ENCODE measurements at regions of chr1 and their contacts with region 1.

Region 1: GRCh38 chr1:43529206-43529731 is 1.4 kb upstream of the PTPRF start:
- DNase-seq: peak; percentile 81
- H3K4me3 ChIP-seq: no peak overlapping the region
- H3K27ac ChIP-seq: no peak overlapping the region
- H3K4me1 ChIP-seq: peaks cover 24% of the 10 kb centered on the region
- H3K27me3 ChIP-seq: no peaks in the 10 kb centered on the region
- CTCF ChIP-seq: peak; percentile 88 to 98
- POLR2A ChIP-seq: no peak

Region 2: DNA sequence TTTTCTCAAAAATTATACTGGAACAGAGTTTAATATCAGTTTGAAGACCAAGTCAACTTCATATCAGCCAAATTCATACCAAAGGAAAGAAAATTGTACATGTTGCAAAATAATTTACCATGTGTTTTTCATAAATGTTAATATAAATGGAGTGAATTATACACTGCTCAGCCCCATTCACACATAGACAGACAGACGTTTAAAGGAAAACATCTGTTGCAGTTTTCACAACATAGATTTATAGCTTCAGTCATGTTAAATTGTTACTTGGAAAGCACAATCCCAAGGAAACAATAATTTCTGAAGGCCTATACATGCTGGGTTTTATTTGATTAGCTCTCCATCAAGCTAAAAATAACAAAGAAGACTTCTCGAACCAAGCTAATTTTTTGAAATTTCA is 47.8 kb before region 1 on chr1:
- CTCF ChIA-PET with region 1: no interaction called
- POLR2A ChIA-PET with region 1: no interaction called
- dilution Hi-C with region 1: no loop called
- intact Hi-C with region 1: loop called (anchors 1 kb)
- DNase-seq: no peak
- H3K4me3 ChIP-seq: no peak overlapping the region
- H3K27ac ChIP-seq: no peak overlapping the region
- H3K4me1 ChIP-seq: peaks cover 13% of the 10 kb centered on the region
- H3K27me3 ChIP-seq: no peaks in the 10 kb centered on the region
- CTCF ChIP-seq: no peak
- POLR2A ChIP-seq: no peak

Region 3: GRCh38 chr1:43554444-43554992 is 25.2 kb after region 1 on chr1:
- CTCF ChIA-PET with region 1: interaction called, 15 read pairs
- POLR2A ChIA-PET with region 1: no interaction called
- dilution Hi-C with region 1: no loop called
- intact Hi-C with region 1: no loop called
- DNase-seq: no peak
- H3K4me3 ChIP-seq: no peak overlapping the region
- H3K27ac ChIP-seq: no peak overlapping the region
- H3K4me1 ChIP-seq: peaks cover 4% of the 10 kb centered on the region
- H3K27me3 ChIP-seq: no peaks in the 10 kb centered on the region
- CTCF ChIP-seq: peak; percentile 48 to 61
- POLR2A ChIP-seq: no peak

Region 4: DNA sequence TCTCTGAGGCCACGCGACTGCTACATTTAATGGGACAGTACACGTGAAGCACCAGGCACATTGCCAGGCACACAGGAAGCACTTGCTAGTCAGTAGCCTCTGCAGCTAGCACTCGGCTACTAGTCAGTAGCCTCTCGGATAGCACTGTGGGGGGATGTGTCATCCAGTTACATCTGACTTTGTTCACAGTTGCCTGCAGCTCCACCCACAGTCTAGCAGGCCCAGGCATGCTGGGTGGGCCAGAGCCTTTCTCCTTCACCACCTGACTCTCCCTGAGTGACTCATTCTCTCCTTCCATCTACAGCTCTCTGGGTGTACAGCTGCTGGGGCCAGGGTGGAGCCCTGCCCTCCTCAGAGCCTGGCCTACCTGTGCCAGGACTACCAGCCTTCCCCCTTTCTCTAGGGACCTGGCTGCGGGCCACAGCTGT is 52.9 kb after region 1 on chr1:
- CTCF ChIA-PET with region 1: interaction called, 4 read pairs
- POLR2A ChIA-PET with region 1: interaction called, 3 read pairs
- dilution Hi-C with region 1: no loop called
- intact Hi-C with region 1: loop called (anchors 5 kb)
- DNase-seq: peak; percentile 89
- H3K4me3 ChIP-seq: no peak overlapping the region
- H3K27ac ChIP-seq: no peak overlapping the region
- H3K4me1 ChIP-seq: peaks cover 3% of the 10 kb centered on the region
- H3K27me3 ChIP-seq: no peaks in the 10 kb centered on the region
- CTCF ChIP-seq: no peak
- POLR2A ChIP-seq: no peak

Region 5: GRCh38 chr1:43611950-43612349 is 82.7 kb after region 1 on chr1:
- CTCF ChIA-PET with region 1: no interaction called
- POLR2A ChIA-PET with region 1: no interaction called
- dilution Hi-C with region 1: no loop called
- intact Hi-C with region 1: no loop called
- DNase-seq: no peak
- H3K4me3 ChIP-seq: no peak overlapping the region
- H3K27ac ChIP-seq: no peak overlapping the region
- H3K4me1 ChIP-seq: no peaks in the 10 kb centered on the region
- H3K27me3 ChIP-seq: no peaks in the 10 kb centered on the region
- CTCF ChIP-seq: no peak
- POLR2A ChIP-seq: no peak

Region 6: DNA sequence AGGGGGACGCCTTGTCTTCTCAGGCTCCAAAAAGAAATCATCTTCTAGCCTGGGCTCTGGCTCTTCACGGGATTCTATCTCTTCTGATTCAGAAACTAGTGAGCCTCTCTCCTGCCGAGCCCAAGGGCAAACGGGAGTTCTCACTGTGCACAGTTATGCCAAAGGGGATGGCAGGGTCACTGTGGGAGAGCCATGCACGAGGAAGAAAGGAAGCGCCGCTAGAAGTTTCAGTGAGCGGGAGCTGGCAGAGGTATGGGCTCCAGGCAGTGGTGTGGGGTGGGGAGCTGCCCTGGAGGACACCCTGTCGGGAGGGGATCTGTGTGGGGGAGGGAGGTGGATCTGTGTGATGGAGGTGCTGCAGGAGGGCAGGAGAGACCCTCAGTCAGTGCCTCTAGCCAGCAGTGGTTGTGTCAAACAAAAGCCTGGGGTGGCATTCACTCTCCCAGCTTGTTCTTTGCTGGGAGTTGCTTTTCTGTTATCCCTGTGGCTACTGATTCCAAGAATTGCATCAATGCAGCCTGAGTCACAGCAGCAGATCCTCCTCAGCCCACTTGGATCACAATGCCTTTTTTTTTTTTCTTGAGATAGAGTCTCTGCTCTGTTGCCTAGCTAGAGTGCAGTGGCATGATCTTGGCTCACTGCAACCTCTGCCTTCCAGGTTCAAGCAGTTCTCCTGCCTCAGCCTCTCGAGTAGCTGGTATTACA is 142.5 kb after region 1 on chr1:
- CTCF ChIA-PET with region 1: no interaction called
- POLR2A ChIA-PET with region 1: no interaction called
- dilution Hi-C with region 1: no loop called
- intact Hi-C with region 1: no loop called
- DNase-seq: no peak
- H3K4me3 ChIP-seq: no peak overlapping the region
- H3K27ac ChIP-seq: no peak overlapping the region
- H3K4me1 ChIP-seq: no peaks in the 10 kb centered on the region
- H3K27me3 ChIP-seq: no peaks in the 10 kb centered on the region
- CTCF ChIP-seq: no peak
- POLR2A ChIP-seq: no peak

Region 7: DNA sequence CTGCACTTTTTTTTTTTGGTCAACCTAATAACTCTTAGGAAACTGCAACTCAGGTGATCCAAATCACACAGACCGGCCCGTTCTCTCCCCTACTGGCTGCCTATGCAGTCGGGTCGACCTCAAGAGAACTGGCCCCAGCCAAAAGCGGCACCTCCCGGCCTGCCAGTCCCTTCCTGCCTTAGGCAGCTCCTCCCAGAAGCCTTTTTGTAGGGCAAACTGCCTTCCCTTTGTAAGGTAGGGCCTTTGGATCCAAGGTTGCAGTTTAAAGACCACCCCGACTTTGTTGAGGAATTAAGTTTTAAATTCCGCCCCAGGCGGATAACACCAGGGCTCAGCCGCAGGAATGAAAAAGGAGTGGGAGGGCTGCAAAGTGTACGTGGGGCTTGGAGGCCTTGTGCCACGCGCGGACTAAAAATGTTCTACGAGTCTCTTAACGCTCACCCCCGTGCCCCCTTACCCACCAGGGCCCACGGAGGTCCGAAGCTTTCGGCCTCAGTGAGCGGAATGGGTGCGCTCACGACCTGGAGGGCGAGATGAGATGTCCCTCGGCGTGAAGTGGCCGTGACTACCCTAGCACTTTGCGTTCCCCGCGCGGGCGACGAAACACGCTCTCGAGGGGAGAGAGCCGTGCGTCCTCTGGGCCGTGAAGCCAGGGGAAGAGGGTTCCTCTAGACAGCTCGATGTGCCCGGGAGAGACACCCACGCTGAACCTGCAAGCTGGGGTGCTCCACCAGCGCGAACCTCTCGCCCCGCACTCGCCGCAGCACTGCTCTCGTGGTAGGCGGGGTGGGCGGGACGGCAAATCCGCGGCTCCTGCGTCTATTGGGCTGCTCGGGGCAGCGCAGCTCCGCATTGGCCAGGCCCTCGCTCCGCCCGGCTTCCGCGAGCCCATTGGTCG is 177.6 kb after region 1 on chr1:
- CTCF ChIA-PET with region 1: interaction called, 3 read pairs
- POLR2A ChIA-PET with region 1: no interaction called
- dilution Hi-C with region 1: no loop called
- intact Hi-C with region 1: loop called (anchors 5 kb)
- DNase-seq: peak; percentile 92
- H3K4me3 ChIP-seq: peak overlapping the region in 2 of 3 experiments; percentile 36 to 56
- H3K27ac ChIP-seq: no peak overlapping the region
- H3K4me1 ChIP-seq: peaks cover 36% of the 10 kb centered on the region
- H3K27me3 ChIP-seq: no peaks in the 10 kb centered on the region
- CTCF ChIP-seq: no peak
- POLR2A ChIP-seq: peak; percentile 93

Region 8: DNA sequence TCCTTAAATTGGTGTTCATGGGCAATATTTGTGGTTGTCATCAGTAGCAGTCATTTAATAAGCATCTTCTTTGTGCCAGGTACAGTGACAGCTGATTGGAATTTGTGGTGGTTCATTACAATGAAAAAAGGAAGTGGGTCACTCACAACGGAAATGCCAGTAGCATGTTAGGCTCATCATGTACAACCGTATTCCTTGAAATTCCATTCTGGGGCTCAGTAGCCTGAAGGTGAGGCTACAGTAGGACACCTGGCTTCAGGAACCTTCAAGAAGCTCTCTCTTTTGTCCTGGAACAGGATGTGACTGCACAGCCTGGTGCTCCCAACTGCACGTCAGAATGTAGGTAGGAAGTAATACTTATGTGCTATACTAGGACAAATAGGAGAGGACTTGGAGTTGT is 271.9 kb after region 1 on chr1:
- CTCF ChIA-PET with region 1: no interaction called
- POLR2A ChIA-PET with region 1: no interaction called
- dilution Hi-C with region 1: no loop called
- intact Hi-C with region 1: no loop called
- DNase-seq: no peak
- H3K4me3 ChIP-seq: no peak overlapping the region
- H3K27ac ChIP-seq: no peak overlapping the region
- H3K4me1 ChIP-seq: no peaks in the 10 kb centered on the region
- H3K27me3 ChIP-seq: no peaks in the 10 kb centered on the region
- CTCF ChIP-seq: no peak
- POLR2A ChIP-seq: no peak

Region 9: DNA sequence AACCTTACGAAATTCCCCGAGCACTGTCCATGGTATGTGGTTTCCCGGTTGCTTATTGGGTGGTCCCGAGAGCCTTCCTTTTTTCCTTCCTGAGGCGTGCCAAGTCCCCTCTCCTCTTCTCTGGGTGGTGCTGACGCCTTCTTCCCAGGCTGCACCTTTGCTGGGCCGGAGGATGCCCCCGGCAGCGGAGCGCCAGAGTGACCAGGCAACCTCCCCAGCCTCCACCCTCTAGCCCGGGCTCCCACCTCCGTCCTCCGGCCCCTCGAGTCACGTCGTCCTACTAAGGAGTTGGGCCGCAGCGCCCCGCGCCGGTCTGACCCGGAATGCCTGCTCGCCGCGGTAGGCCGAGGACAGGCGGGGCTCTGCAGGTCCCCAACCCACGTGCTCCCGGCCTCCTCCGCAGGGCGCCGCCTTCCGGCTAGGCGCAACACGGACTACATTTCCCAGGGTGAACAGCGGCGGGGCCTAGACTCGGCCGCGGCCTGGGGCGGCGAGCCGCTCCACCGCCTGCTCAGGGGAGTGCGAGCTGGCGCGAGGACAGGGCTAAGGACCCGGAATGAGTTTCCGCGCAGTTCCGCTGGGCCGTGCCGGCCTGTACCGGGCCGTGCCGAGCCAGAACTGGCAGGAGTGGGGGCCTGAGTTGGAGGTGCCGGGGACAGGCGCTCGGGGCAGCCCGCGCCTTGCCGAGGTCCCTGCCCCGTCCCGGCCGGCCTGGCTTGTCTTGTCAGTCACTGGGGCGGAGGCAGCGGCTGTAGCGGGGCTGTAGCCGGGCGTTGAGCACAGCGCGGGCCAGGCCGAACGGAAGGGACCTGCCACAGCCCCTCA is 417.2 kb after region 1 on chr1 and contains the start of gene IPO13:
- CTCF ChIA-PET with region 1: no interaction called
- POLR2A ChIA-PET with region 1: no interaction called
- dilution Hi-C with region 1: no loop called
- intact Hi-C with region 1: loop called (anchors 1 kb)
- DNase-seq: peak; percentile 96
- H3K4me3 ChIP-seq: peak within 1 kb of the TSS; percentile 64 to 76 (median 67)
- H3K27ac ChIP-seq: peak within 1 kb of the TSS; percentile 94
- H3K4me1 ChIP-seq: peaks cover 20% of the 10 kb centered on the region
- H3K27me3 ChIP-seq: no peaks in the 10 kb centered on the region
- CTCF ChIP-seq: peak; percentile 65 to 70
- POLR2A ChIP-seq: peak; percentile 86
- total RNA-seq, gene IPO13: 25.8 and 29.3 TPM in 2 replicates

Region 10: GRCh38 chr1:44025816-44026215 is 496.5 kb after region 1 on chr1:
- CTCF ChIA-PET with region 1: no interaction called
- POLR2A ChIA-PET with region 1: no interaction called
- dilution Hi-C with region 1: no loop called
- intact Hi-C with region 1: no loop called
- DNase-seq: no peak
- H3K4me3 ChIP-seq: no peak overlapping the region
- H3K27ac ChIP-seq: no peak overlapping the region
- H3K4me1 ChIP-seq: peaks cover 7% of the 10 kb centered on the region
- H3K27me3 ChIP-seq: no peaks in the 10 kb centered on the region
- CTCF ChIP-seq: no peak
- POLR2A ChIP-seq: no peak